ENCODE measurements at regions of chr11 and their contacts with region 1.

Region 1: DNA sequence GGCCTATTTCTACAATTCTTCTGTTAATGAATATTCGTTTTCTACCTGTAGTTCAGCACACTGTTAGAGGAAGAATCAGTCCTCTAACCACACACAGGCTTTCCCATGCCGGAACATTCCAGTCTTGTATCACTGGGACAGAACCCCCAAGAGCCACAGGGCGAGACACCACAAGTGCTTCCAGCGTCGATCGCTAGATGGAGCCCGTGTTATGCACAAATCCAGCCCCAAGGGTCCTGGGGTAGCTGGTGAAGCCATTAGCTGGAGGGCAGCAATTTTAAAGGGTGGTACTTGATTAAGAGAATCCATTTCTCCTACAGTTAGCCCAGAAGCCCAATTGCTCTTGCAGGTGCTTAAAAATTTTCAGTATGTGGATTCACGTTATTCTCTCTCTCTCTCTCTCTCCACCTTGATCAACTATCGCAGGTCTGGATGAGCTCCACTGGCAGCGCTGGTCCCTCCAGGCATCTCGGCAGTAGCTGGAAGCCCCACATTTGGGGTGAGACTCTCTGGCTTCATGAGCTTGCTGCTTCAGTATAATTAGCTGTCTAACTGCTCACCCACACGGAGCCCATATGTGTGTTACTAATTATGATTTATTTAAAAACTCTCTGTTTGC is 148.2 kb upstream of the SNX19 start:
- DNase-seq: peak; percentile 69
- CTCF ChIP-seq: peak; percentile 83

Region 2: GRCh38 chr11:131079036-131079435 is 14.6 kb after region 1 on chr11:
- CTCF ChIA-PET with region 1: interaction called, 13 read pairs
- POLR2A ChIA-PET with region 1: no interaction called
- DNase-seq: no peak
- CTCF ChIP-seq: no peak

Region 3: DNA sequence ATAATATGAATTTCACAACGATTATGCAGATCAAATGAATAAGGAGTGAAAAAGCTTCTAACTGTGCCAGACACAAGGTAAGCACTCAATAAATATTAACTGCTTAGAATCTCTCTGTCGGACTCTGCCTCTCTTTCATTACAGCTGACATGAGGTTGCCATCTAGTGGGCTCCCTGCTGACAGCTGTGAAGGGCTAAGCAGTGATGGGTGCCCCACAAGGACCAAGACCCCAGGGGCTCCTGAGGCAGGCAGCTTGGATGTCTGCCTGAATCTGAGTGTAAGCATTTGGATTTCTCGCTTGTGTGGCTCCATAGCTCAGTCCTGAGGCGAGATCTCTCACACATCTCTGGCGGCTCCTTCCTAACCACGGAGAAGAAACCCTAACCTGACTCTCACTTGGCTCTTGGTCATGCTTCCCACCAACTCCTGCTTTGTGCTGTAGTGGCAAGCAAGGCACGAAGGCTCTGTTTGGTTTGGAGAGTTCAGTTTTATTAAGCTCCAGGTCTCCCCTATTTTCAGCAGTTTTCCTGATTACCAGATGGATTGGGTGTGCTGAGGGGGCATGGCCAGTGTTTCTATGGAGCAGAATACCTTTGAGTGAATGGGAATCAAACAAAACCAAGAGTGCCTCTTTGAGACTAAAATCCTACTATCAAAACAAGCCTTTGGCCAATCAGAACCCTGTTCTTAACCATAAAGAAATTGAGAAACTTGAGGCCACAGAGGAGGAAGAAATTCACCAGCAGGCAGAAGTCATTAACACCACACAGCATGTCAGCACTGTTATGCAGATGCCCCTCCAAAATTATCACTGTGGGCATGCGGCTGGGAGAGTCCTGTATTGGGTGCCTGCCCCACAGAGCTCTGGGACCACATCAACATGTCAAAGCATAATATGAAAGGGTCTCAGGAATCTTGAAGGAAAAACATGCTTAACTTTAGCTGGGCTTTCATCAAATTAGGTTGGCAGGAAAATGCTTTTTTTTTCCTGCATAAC is 153.1 kb after region 1 on chr11:
- CTCF ChIA-PET with region 1: interaction called, 100 read pairs
- POLR2A ChIA-PET with region 1: no interaction called
- DNase-seq: no peak
- CTCF ChIP-seq: peak; percentile 55

Region 4: GRCh38 chr11:131511794-131512193 is 447.3 kb after region 1 on chr11:
- CTCF ChIA-PET with region 1: interaction called, 47 read pairs
- POLR2A ChIA-PET with region 1: no interaction called
- DNase-seq: peak; percentile 43
- CTCF ChIP-seq: peak; percentile 56